ENCODE measurements at regions of chr13 and their contacts with region 1.

Region 1: DNA sequence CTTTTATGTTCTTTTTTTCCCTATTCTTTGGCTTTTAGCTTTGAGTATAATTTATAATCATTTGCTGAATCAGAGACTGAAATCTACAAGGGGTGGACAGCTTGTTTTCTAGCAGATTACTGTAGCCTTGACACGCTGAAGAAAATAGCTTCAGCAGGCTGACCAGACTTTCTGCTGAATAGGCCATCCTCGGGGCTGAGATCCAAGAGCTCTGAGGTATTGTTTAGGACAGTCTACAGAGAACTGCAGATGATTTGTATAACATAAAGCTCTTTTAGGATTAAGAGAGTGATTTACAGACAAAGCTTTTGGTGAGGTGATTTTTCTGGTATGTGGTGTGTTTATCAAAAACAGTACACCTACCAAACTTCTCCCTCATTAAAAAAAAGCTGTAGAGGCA is 16.8 kb downstream of the POLR1D start:
- DNase-seq: no peak
- CTCF ChIP-seq: no peak

Region 2: DNA sequence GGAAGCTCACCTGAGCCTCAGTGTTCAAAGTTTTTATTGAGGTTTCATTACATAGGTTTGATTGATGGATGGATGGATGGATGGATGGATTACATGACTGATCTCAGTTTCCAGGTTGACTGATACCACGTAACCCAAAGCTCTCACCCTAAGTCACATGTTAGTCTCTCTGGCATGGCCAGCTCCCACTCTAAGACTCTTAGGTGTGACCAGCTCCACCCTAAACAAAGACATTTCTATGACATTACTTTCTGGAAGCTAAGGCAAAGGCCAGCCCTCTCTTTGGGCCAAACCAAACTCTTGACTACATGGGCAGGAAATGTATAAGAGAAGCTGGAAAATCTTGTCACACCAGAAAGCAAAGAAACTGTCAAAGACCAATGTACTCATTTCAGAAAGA is 11.8 kb after region 1 on chr13:
- CTCF ChIA-PET with region 1: interaction called, 13 read pairs
- POLR2A ChIA-PET with region 1: no interaction called
- DNase-seq: no peak
- CTCF ChIP-seq: no peak